Motor neuron (in vitro differentiated cells): ENCODE measurements at regions of chr3 and their contacts with region 1.

Region 1: GRCh38 chr3:104604369-104605010 is 762.2 kb upstream of the ALCAM start:
- ATAC-seq: peak in 4 of 8 experiments; percentile 49 to 82 (median 64)
- H3K4me3 ChIP-seq: no peak overlapping the region
- H3K27ac ChIP-seq: no peak overlapping the region
- H3K4me1 ChIP-seq: no peaks in the 10 kb centered on the region

Region 2: DNA sequence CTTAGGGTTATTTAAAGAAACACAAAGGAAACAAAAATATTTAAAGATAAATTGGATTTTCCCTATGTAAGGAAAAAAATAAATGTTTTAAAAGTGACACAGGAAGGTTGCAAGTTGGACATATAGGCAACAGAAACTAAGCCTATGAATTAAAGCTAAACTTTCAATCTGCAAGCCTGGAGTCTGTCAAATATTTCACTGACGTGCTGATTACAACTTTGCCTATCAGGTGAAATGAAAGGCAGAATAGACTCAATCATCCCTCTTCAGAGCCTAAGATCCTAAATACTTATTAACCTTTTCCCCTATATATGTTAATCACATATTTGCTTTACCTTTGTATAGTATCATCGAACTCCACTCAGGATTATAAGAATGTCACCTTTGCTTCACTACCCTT is 305.8 kb before region 1 on chr3:
- in situ Hi-C with region 1: no loop called
- ATAC-seq: no peak
- H3K4me3 ChIP-seq: no peak overlapping the region
- H3K27ac ChIP-seq: no peak overlapping the region
- H3K4me1 ChIP-seq: peaks cover 0 to 8% of the 10 kb centered on the region in 2 donors

Region 3: DNA sequence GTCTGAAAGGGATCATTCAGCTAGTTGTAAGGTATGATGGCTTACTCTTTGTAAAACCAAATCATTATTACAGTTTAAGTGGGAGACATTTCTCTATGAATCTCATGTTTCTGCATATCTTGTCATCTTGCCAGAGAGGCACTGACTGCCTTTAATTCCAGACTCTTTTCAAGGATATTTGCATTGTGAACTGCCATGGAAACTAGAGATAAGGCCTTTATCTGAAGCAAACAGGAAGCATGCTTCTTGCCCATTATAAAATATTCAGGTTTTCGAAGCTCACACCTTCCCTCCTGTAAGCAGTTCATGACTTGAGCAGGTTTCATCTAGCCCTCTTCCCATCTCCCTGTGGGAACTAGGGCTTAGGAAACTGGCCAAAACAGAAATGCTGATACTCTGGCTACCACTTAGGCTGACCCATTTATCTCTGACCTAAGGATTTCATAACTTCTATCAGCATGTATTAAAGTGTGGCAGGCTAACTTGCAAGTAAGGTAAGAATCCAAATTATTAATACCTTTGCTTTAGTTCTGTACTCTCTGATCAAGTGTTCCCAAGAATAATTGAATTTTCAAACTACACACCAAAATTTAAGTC is 435.6 kb after region 1 on chr3:
- in situ Hi-C with region 1: no loop called
- ATAC-seq: no peak
- H3K4me3 ChIP-seq: no peak overlapping the region
- H3K27ac ChIP-seq: no peak overlapping the region
- H3K4me1 ChIP-seq: peaks cover 0 to 3% of the 10 kb centered on the region in 2 donors

Region 4: GRCh38 chr3:105518806-105519418 is 914.4 kb after region 1 on chr3:
- in situ Hi-C with region 1: loop called in 1 of 9 experiments (anchors 25 kb)
- ATAC-seq: peak; percentile 40 to 80 (median 62)
- H3K4me3 ChIP-seq: no peak overlapping the region
- H3K27ac ChIP-seq: no peak overlapping the region
- H3K4me1 ChIP-seq: no peaks in the 10 kb centered on the region